MCF 10A (cell line): ENCODE measurements at regions of chrX and their contacts with region 1.

Region 1: GRCh38 chrX:151505796-151506195 is 57.7 kb upstream of the PASD1 start:
- DNase-seq: peak; percentile 47
- H3K4me3 Mint-ChIP-seq: no peak overlapping the region
- H3K27ac Mint-ChIP-seq: no peak overlapping the region
- H3K4me1 Mint-ChIP-seq: no peaks in the 10 kb centered on the region
- H3K27me3 Mint-ChIP-seq: peaks cover 17% of the 10 kb centered on the region
- CTCF ChIP-seq: peak; percentile 25

Region 2: GRCh38 chrX:151675121-151675746 is 169.4 kb after region 1 on chrX:
- CTCF ChIA-PET with region 1: interaction called, 17 read pairs
- POLR2A ChIA-PET with region 1: interaction called, 3 read pairs
- intact Hi-C with region 1: no loop called
- DNase-seq: no peak
- H3K4me3 Mint-ChIP-seq: no peak overlapping the region
- H3K27ac Mint-ChIP-seq: no peak overlapping the region
- H3K4me1 Mint-ChIP-seq: peaks cover 4% of the 10 kb centered on the region
- H3K27me3 Mint-ChIP-seq: no peaks in the 10 kb centered on the region
- CTCF ChIP-seq: no peak

Region 3: GRCh38 chrX:151680805-151681204 is 175.0 kb after region 1 on chrX:
- CTCF ChIA-PET with region 1: interaction called, 11 read pairs
- POLR2A ChIA-PET with region 1: no interaction called
- intact Hi-C with region 1: loop called (anchors 1 kb)
- DNase-seq: peak; percentile 73
- H3K4me3 Mint-ChIP-seq: no peak overlapping the region
- H3K27ac Mint-ChIP-seq: no peak overlapping the region
- H3K4me1 Mint-ChIP-seq: peaks cover 6% of the 10 kb centered on the region
- H3K27me3 Mint-ChIP-seq: no peaks in the 10 kb centered on the region
- CTCF ChIP-seq: peak; percentile 60